PC-9 (cell line): ENCODE measurements at regions of chr12 and their contacts with region 1.

Region 1: GRCh38 chr12:49146406-49146805 is 15.2 kb upstream of the TUBA1B start:
- DNase-seq: no peak
- H3K4me3 ChIP-seq: no peak overlapping the region
- H3K27ac ChIP-seq: no peak overlapping the region
- H3K4me1 ChIP-seq: no peaks in the 10 kb centered on the region
- H3K27me3 ChIP-seq: no peaks in the 10 kb centered on the region
- CTCF ChIP-seq: no peak

Region 2: GRCh38 chr12:48696626-48697025 is 449.8 kb before region 1 on chr12:
- CTCF ChIA-PET with region 1: no interaction called
- POLR2A ChIA-PET with region 1: no interaction called
- intact Hi-C with region 1: no loop called
- DNase-seq: no peak
- H3K4me3 ChIP-seq: no peak overlapping the region
- H3K27ac ChIP-seq: no peak overlapping the region
- H3K4me1 ChIP-seq: no peaks in the 10 kb centered on the region
- H3K27me3 ChIP-seq: no peaks in the 10 kb centered on the region
- CTCF ChIP-seq: no peak

Region 3: DNA sequence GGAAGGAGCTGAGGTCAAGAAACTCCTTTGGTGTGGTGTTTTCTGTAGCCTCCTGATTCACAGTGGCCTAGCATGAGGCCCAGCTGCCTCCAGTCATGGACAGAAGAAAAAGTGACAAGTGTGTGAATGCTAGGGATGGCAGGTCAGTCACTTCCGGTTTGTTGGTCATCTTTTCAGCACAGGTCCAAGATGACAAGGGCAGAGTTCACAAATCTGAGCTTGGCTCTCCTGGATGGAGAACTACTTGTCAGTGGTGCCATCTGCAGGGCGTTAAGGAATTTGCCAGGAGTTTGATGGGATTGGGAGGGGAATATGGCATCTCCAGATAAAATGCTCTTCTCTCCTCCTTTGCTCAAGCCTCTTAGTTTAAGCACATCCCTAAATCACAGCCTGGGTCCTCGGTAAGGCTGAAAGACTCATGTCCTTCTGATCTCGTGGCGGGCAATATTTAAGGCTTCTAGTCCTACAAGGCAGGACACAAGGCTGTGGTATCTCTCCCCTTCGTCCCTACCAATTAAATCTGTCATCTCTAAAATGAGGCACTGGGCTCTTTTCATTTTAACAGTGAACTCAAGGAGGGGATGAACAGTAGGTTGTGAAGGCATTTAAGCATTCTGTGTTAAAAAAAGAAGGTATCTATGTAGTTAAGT is 25.2 kb before region 1 on chr12:
- CTCF ChIA-PET with region 1: no interaction called
- POLR2A ChIA-PET with region 1: interaction called, 23 read pairs
- intact Hi-C with region 1: no loop called
- DNase-seq: peak in 1 of 2 experiments; percentile 75
- H3K4me3 ChIP-seq: no peak overlapping the region
- H3K27ac ChIP-seq: no peak overlapping the region
- H3K4me1 ChIP-seq: no peaks in the 10 kb centered on the region
- H3K27me3 ChIP-seq: no peaks in the 10 kb centered on the region
- CTCF ChIP-seq: peak; percentile 73

Region 4: DNA sequence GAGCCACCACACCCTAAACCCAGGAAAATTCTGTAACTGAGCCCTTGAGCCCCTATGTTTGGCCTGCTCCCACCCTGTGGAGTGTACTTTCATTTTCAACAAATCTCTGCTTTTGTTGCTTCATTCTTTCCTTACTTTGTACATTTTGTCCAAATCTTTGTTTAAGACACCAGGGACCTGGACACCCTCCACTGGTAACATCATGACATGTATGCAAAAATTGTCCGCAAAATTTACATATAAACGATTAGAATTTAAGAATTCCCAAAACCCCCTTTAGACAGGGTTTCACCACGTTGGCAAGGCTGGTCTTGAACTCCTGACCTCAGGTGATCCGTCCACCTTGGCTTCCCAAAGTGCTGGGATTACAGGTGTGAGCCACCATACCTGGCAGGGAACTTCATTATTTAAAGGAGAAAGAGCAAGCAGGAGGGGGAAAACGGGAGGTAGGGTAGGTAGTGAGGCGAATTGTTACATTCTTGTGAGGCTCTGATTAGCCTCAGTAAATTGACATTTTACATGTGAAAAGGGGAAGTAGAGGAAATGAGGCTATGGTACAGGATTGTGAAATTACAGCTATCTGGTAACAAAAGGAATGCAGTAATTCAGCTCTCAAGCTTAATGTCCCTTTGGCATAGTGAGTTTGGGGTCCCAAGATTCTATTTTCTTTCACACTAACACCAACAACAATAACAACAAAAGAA is 14.8 kb after region 1 on chr12:
- CTCF ChIA-PET with region 1: interaction called, 13 read pairs
- POLR2A ChIA-PET with region 1: no interaction called
- intact Hi-C with region 1: no loop called
- DNase-seq: no peak
- H3K4me3 ChIP-seq: no peak overlapping the region
- H3K27ac ChIP-seq: no peak overlapping the region
- H3K4me1 ChIP-seq: no peaks in the 10 kb centered on the region
- H3K27me3 ChIP-seq: no peaks in the 10 kb centered on the region
- CTCF ChIP-seq: no peak